ENCODE measurements at regions of chr20 and their contacts with region 1.

Region 1: GRCh38 chr20:45934586-45935415 is at the start of gene PCIF1:
- DNase-seq: peak in 1 of 2 donors; percentile 99
- H3K4me3 ChIP-seq: peak within 1 kb of the TSS; percentile 74 to 94
- H3K27ac ChIP-seq: peak within 1 kb of the TSS; percentile 100
- H3K4me1 ChIP-seq: peaks cover 30% of the 10 kb centered on the region
- H3K27me3 ChIP-seq: no peaks in the 10 kb centered on the region
- CTCF ChIP-seq: no peak
- POLR2A ChIP-seq: peak; percentile 76 to 82
- total RNA-seq, gene PCIF1: 36.6 TPM

Region 2: GRCh38 chr20:45890985-45891983 is 43.5 kb before region 1 on chr20 and contains the starts of genes CTSA and NEURL2:
- intact Hi-C with region 1: loop called (anchors 2 kb)
- DNase-seq: no peak
- H3K4me3 ChIP-seq: peak within 1 kb of the TSS; percentile 67 to 92
- H3K27ac ChIP-seq: peak within 1 kb of the TSS; percentile 88
- H3K4me1 ChIP-seq: peaks cover 39% of the 10 kb centered on the region
- H3K27me3 ChIP-seq: no peaks in the 10 kb centered on the region
- CTCF ChIP-seq: no peak
- POLR2A ChIP-seq: no peak
- total RNA-seq, gene CTSA: 114 TPM
- total RNA-seq, gene NEURL2: 15.2 TPM

Measured in vagina (tissue), 2 donors.